Activated T-helper 1 cell treated with anti-CD3 and anti-CD28 coated beads, Interleukin-12 subunit alpha, Interleukin-12 subunit beta, Interleukin-2, Interleukin-4 antibody, amounts not matched to agents 30 ng/mL and 10 ng/mL and 1 ng/mL, durations not matched to agents 14 hours and 24 hours and 36 hours (primary cell): ENCODE measurements at regions of chr6 and their contacts with region 1.

Region 1: DNA sequence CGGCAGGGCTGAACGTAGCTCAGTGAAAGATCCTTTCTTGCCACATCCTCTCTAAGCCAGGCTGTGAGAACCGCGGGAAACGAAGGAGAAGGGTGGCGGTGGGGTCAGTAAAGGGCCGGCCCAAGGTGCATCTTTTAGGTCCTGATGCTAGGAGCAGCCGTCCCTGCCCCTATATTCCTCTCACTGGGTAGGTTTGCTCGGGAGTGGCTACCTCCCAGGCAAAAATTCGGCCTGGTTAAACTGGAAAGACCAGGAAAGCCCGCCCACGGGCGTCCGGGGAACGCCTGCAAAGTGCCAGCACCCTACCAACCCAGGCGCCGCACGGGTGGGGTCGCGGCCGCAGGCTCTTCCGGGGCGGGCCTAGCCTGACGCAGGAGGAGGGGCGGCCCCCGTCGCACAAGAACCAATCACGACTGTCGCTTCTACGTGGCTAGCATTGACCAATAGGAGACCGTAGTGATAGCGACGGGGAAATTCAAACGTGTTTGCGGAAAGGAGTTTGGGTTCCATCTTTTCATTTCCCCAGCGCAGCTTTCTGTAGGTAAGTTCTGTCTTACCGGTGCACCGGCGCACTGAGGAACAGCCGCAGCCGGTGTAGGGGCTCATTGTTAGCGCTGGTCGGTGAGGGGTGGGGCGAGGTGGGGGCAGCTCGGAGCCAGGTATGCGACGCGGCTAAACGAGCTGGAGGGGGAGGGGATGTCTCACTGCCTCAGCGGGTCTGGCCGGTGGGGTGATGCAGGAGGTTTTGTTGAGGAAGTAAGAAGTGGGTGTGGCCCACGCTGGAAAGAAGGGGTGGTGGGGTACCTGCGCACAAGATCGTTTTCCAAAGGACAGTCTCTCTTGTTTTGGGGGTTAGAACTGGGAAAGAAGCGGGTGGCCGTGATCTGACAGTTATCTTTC is at the start of gene TTK:
- DNase-seq: peak; percentile 92
- H3K4me3 Mint-ChIP-seq: peak within 1 kb of the TSS; percentile 95
- H3K27ac Mint-ChIP-seq: peak within 1 kb of the TSS; percentile 94
- H3K4me1 Mint-ChIP-seq: peaks cover 50% of the 10 kb centered on the region
- H3K27me3 Mint-ChIP-seq: no peaks in the 10 kb centered on the region
- total RNA-seq, gene TTK: 22.4 and 23.5 TPM in 2 replicates

Region 2: GRCh38 chr6:79233611-79234149 is 770.7 kb before region 1 on chr6:
- intact Hi-C with region 1: loop called (anchors 1 kb)
- DNase-seq: peak; percentile 72
- H3K4me3 Mint-ChIP-seq: peak overlapping the region; percentile 95
- H3K27ac Mint-ChIP-seq: peak overlapping the region; percentile 92
- H3K4me1 Mint-ChIP-seq: peaks cover 41% of the 10 kb centered on the region
- H3K27me3 Mint-ChIP-seq: no peaks in the 10 kb centered on the region

Region 3: DNA sequence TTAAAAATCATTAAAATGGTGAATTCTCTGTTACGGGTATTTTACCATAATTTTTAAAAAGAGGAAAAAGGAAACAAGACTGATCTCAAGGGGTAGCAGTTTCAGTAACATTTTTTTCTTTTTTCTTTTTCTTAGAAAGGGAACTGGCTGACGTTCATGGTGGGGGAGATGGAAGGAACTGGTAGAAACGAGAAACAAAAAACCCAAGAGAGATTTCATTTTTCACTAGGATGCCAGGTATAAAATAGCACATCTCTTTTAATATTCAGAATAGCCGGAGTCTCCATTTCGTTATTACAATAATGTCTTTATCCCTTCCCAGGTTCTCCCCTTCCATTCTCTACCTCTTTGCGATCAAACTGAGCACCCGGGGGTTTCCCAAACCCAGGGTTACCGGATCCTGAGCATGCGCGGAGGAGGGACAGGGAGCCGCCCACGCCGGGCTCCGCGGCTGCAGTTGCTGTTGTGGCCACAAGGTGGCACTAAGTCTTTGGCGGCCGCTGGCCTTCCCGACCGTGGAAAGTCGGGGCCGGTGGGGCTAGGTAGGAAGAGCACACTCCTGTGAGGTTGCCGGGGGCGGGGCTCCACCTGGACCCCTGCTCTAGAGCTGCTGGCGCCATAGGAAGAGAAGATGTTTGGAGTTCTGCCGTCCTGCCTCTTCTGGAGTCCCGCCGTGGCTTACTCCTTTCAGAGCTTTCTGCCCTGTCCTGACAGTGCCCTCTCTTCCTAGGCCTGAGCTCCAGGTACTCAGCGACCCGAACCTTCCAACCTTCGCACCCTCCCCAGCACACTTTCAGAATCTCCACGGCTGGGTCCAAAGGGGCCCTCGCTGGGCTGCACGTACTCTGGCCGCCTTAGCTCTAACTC is 226.5 kb before region 1 on chr6:
- intact Hi-C with region 1: loop called (anchors 5 kb)
- DNase-seq: peak; percentile 85
- H3K4me3 Mint-ChIP-seq: peak overlapping the region; percentile 67
- H3K27ac Mint-ChIP-seq: peak overlapping the region; percentile 21
- H3K4me1 Mint-ChIP-seq: peaks cover 10% of the 10 kb centered on the region
- H3K27me3 Mint-ChIP-seq: no peaks in the 10 kb centered on the region

Region 4: DNA sequence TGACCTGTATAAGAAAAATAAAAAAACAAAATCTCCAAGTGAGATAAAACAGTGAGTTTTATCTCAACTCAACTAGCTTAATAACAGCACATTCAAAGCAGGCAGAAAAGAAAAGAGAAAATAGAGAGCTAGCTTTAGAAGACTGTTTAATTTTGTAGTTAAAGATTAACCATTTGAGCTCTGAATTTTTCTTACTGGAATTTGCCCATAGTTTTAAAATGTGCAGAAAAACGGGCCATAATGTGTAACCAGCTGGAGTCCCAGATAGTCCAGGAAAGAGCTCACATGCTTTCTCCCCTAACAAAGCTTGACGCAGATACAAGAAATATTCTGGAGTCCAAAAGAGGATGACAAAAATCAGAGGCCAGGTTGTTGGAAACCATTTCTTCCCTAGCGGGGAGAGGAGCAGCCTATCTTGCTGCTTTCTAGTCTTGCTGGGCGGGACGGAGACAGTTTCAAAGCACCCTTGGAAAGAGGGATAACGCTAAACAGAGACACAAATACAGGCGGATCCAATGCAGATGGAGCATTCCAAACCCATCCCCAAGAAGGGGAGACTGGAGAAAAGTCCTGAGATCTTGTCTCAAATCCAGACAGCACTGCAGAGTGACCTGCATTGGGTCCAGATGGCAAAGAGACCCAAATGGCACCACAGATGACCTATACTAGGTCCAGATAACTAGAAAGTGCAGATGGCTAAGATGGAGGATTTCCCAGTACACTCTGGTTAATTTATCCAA is 16.1 kb after region 1 on chr6:
- intact Hi-C with region 1: loop called (anchors 2 kb)
- DNase-seq: no peak
- H3K4me3 Mint-ChIP-seq: no peak overlapping the region
- H3K27ac Mint-ChIP-seq: no peak overlapping the region
- H3K4me1 Mint-ChIP-seq: no peaks in the 10 kb centered on the region
- H3K27me3 Mint-ChIP-seq: no peaks in the 10 kb centered on the region

Region 5: GRCh38 chr6:80163658-80164187 is 159.3 kb after region 1 on chr6:
- intact Hi-C with region 1: loop called (anchors 2 kb)
- DNase-seq: no peak
- H3K4me3 Mint-ChIP-seq: no peak overlapping the region
- H3K27ac Mint-ChIP-seq: no peak overlapping the region
- H3K4me1 Mint-ChIP-seq: no peaks in the 10 kb centered on the region
- H3K27me3 Mint-ChIP-seq: no peaks in the 10 kb centered on the region